ENCODE measurements at regions of chr9 and their contacts with region 1.

Region 1: DNA sequence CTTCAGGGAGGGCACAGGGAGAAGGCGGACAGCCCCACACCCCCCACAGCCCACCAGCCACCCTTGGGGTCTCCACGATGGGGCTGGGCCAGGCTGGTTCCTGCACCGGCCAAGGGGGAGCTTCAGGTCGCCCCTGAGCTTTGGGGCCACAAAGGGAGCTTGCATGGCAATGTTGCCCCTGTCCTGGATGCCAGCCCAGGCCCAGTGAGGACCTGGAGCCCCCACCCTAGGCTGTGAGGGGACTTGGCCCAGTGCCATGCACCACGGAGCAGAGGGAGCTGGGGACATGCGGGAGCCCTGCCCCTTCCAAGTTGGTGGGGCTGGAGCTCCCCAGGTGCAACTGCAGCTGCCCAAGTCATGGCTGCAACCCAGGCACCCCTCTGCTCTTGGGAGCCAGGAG is 18.4 kb downstream of the TMEM38B start:
- DNase-seq: no peak
- H3K4me3 ChIP-seq: no peak overlapping the region
- H3K27ac ChIP-seq: no peak overlapping the region
- H3K4me1 ChIP-seq: no peaks in the 10 kb centered on the region
- H3K27me3 ChIP-seq: no peaks in the 10 kb centered on the region
- CTCF ChIP-seq: no peak
- POLR2A ChIP-seq: no peak

Region 2: DNA sequence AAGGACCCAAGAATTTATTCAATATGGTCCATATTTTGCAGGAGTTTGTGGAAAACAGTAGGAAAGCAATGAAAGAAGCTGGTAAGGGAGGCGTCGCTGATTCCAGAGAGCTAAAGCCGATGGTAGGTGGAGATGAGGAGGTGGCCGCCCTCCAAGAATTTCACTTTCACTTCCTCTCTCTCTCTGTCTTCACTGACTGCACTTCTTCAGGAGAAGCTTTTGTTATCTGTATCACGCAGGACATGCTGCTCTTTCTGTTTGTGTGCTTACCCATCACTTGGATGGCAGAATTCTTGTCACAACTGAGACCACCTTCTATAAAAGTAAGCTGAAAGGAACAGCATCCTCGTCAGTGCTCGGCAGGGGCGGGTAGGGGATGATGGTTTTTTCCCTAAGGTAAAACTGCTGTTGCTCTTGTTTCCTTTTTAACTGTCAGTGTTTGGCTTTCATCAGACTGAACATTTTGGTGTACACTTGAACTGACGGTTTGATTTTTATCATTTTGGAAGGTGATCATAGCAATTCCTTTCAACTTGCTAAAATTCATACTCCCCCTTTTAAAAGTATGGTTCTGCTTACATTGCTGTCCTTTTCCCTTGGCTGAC is 327.3 kb before region 1 on chr9:
- intact Hi-C with region 1: no loop called
- DNase-seq: peak; percentile 35 to 73 (median 54)
- H3K4me3 ChIP-seq: peak overlapping the region in 1 of 4 donors; percentile 46
- H3K27ac ChIP-seq: peak overlapping the region in 3 of 5 donors; percentile 24 to 62 (median 35)
- H3K4me1 ChIP-seq: peaks cover 3 to 5% of the 10 kb centered on the region in 2 donors
- H3K27me3 ChIP-seq: no peaks in the 10 kb centered on the region
- CTCF ChIP-seq: no peak
- POLR2A ChIP-seq: peak in 1 of 2 donors; percentile 17

Region 3: GRCh38 chr9:105425841-105426436 is 286.8 kb before region 1 on chr9:
- intact Hi-C with region 1: loop called in 1 of 2 experiments (anchors 10 kb)
- DNase-seq: no peak
- H3K4me3 ChIP-seq: no peak overlapping the region
- H3K27ac ChIP-seq: no peak overlapping the region
- H3K4me1 ChIP-seq: no peaks in the 10 kb centered on the region
- H3K27me3 ChIP-seq: no peaks in the 10 kb centered on the region
- CTCF ChIP-seq: peak; percentile 42 to 65 (median 60)
- POLR2A ChIP-seq: no peak

Region 4: DNA sequence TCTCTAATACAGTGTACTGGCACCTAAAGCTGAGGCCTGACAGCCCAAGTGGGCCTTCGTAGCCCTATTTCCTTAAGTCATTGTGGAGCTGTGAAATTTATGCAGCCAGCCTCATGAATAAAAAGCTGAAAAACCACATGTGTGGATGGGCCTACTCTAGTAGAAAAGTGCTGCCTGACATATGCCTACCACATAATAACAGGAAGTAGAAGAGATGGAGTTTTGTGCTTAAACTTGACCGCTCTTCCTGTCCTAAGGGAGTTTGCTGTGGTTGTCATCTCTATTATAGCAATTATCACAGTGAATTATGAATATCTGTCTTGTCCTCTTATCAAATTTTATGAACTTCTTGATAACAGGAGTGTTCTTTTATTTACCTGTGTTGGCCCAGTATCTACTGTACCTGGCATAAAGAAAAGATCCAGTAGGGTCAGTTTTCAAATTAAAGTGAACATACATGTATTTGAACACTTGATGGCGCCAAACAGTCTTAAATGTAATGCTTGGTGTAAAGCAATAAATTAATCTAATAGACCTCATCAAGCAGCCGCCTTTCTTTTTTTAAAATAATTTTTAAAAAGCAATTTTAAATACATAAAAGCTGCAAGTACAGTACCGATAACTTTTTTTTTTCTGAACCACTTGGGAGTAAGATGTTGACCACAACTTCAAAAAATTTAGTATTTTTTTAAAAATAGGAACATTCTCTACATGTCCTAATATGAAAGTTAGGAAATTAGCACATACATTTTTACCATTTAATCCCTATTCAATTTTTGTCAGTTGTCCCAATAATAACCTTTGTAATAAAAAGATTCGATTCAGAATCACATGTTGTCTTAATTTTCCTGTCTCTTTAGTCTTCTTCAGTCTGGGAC is 103.8 kb before region 1 on chr9:
- intact Hi-C with region 1: loop called in 1 of 2 experiments (anchors 5 kb)
- DNase-seq: no peak
- H3K4me3 ChIP-seq: no peak overlapping the region
- H3K27ac ChIP-seq: no peak overlapping the region
- H3K4me1 ChIP-seq: no peaks in the 10 kb centered on the region
- H3K27me3 ChIP-seq: no peaks in the 10 kb centered on the region
- CTCF ChIP-seq: peak; percentile 39 to 70 (median 54)
- POLR2A ChIP-seq: no peak

Region 5: GRCh38 chr9:105656131-105656921 is 56.4 kb before region 1 on chr9:
- intact Hi-C with region 1: loop called in 1 of 2 experiments (anchors 10 kb)
- DNase-seq: peak in 5 of 7 donors; percentile 21 to 32 (median 24)
- H3K4me3 ChIP-seq: peak overlapping the region in 2 of 4 donors; percentile 38 to 49
- H3K27ac ChIP-seq: no peak overlapping the region
- H3K4me1 ChIP-seq: peaks cover 0 to 11% of the 10 kb centered on the region in 2 donors
- H3K27me3 ChIP-seq: no peaks in the 10 kb centered on the region
- CTCF ChIP-seq: peak in 4 of 6 experiments; percentile 11 to 35 (median 22)
- POLR2A ChIP-seq: no peak

Region 6: GRCh38 chr9:105822814-105823213 is 110.0 kb after region 1 on chr9:
- intact Hi-C with region 1: no loop called
- DNase-seq: no peak
- H3K4me3 ChIP-seq: no peak overlapping the region
- H3K27ac ChIP-seq: no peak overlapping the region
- H3K4me1 ChIP-seq: no peaks in the 10 kb centered on the region
- H3K27me3 ChIP-seq: no peaks in the 10 kb centered on the region
- CTCF ChIP-seq: no peak
- POLR2A ChIP-seq: no peak

Region 7: DNA sequence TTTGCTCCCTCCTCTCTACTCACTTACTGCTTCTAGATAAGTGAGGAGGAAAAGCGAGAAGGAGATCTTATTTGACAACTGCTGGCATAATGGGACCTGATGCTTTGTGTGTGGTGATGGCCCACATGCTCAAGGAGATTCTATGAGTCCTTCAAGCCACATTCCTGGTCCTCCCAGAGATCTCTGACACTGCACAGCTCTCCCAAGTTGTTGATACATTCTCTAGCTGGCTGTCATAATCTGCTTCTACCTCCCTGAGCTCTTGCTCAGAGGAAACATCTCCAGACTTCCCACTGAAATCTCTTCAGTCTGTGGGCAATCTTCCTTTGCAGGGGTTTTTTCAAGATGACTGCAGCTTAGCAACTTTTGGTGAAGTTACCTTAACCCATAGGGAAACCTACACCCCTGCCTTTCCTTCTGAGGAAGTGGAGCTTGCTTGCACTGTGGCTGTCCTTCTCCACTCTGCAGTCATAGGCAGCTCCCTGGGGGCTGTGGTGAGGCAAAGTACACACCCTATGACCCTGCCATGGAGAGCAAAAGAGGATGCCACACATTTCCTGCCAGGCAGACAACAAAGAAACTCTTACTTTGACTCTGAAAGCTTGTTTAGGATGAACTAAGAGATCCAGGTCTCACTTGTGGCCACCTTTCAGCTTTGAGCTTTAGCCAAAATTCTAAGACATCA is 145.4 kb after region 1 on chr9:
- intact Hi-C with region 1: no loop called
- DNase-seq: no peak
- H3K4me3 ChIP-seq: no peak overlapping the region
- H3K27ac ChIP-seq: no peak overlapping the region
- H3K4me1 ChIP-seq: no peaks in the 10 kb centered on the region
- H3K27me3 ChIP-seq: no peaks in the 10 kb centered on the region
- CTCF ChIP-seq: no peak
- POLR2A ChIP-seq: no peak

Region 8: DNA sequence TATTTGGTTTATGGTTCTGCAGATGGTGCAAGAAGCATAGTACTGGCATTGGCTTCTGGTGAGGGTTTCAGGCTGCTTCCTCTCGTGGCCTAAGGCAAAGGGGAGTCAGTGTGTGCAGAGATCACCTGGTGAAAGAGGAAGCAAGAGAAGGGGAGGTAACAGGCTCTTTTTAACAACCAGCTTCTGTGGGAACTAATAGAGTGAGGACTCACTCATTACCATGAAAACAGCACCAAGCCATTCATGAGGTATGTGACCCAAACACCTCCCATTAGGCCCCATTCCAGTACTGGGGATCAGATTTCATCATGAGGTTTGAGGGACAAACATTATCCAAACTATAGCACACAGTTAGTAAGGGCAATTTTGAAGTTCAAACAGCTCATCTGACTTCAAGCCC is 245.1 kb after region 1 on chr9:
- intact Hi-C with region 1: no loop called
- DNase-seq: no peak
- H3K4me3 ChIP-seq: no peak overlapping the region
- H3K27ac ChIP-seq: no peak overlapping the region
- H3K4me1 ChIP-seq: no peaks in the 10 kb centered on the region
- H3K27me3 ChIP-seq: no peaks in the 10 kb centered on the region
- CTCF ChIP-seq: no peak
- POLR2A ChIP-seq: no peak

Measured in adrenal gland (tissue), 19 donors.